Natural killer cell (primary cell): ENCODE measurements at regions of chr21 and their contacts with region 1.

Region 1: DNA sequence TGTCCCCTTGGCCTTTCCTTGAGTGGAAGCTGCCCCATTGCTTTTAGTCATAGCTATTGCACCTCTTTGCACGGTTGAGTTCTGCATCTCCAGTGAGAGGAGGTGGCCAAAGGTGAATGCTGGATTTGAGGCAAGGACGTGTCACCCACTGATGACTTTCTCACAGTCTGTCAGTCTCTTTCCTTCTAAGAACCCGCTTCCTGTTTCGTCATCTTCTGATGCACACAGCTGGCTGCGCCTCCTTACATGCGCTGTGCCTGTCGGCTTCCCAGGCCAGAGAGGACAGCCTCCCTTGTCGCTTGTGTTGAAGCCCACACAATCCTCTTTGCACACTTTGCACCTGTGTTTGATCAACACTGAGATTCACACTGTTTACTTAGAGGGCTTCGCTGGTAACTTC is 41.8 kb upstream of the PWP2 start:
- DNase-seq: peak; percentile 74 to 97
- ATAC-seq: peak; percentile 89 to 96 (median 90)
- H3K4me3 ChIP-seq: no peak overlapping the region
- H3K4me3 Mint-ChIP-seq: peak overlapping the region; percentile 85
- H3K27ac ChIP-seq: peak overlapping the region; percentile 94
- H3K27ac Mint-ChIP-seq: peak overlapping the region; percentile 94 to 100
- H3K4me1 ChIP-seq: peaks cover 27% of the 10 kb centered on the region
- H3K4me1 Mint-ChIP-seq: peaks cover 56 to 61% of the 10 kb centered on the region in 2 donors
- H3K27me3 ChIP-seq: no peaks in the 10 kb centered on the region
- H3K27me3 Mint-ChIP-seq: no peaks in the 10 kb centered on the region
- CTCF ChIP-seq: no peak

Region 2: GRCh38 chr21:44020551-44020950 is 44.9 kb before region 1 on chr21:
- intact Hi-C with region 1: loop called (anchors 2 kb)
- DNase-seq: no peak
- ATAC-seq: no peak
- H3K4me3 ChIP-seq: no peak overlapping the region
- H3K4me3 Mint-ChIP-seq: peak overlapping the region; percentile 17
- H3K27ac ChIP-seq: peak overlapping the region; percentile 63
- H3K27ac Mint-ChIP-seq: peak overlapping the region; percentile 83 to 95
- H3K4me1 ChIP-seq: peaks cover 74% of the 10 kb centered on the region
- H3K4me1 Mint-ChIP-seq: peaks cover 84 to 90% of the 10 kb centered on the region in 2 donors
- H3K27me3 ChIP-seq: no peaks in the 10 kb centered on the region
- H3K27me3 Mint-ChIP-seq: no peaks in the 10 kb centered on the region
- CTCF ChIP-seq: no peak

Region 3: DNA sequence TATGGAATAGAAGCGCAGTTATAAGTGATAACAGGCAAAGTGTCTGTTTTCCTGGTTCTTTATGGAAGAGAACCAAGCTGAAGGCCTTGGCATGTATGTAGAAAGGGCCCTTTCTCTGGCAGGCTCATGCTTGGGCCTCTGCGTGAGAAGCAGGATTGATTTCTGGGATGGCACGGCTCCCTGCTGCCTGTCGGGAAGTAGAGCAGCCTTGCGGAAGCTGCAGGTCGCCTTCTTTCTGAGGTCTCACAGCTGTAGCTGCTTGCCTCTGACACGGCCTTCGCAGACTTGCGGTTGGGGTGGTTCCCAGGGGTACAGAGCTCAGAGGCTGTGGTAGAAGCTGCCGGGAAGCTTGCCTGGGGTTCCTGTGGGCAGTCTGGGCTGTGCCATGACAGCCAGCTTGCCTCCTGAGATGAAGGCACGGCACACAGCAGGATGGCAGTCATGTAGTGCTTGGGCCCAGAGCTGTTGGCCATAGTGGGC is 13.9 kb before region 1 on chr21:
- intact Hi-C with region 1: no loop called
- DNase-seq: peak in 1 of 2 donors; percentile 32
- ATAC-seq: peak in 2 of 3 donors; percentile 45 to 64
- H3K4me3 ChIP-seq: no peak overlapping the region
- H3K4me3 Mint-ChIP-seq: no peak overlapping the region
- H3K27ac ChIP-seq: no peak overlapping the region
- H3K27ac Mint-ChIP-seq: peak overlapping the region; percentile 30 to 86
- H3K4me1 ChIP-seq: peaks cover 20% of the 10 kb centered on the region
- H3K4me1 Mint-ChIP-seq: peaks cover 68 to 70% of the 10 kb centered on the region in 2 donors
- H3K27me3 ChIP-seq: no peaks in the 10 kb centered on the region
- H3K27me3 Mint-ChIP-seq: no peaks in the 10 kb centered on the region
- CTCF ChIP-seq: no peak

Region 4: GRCh38 chr21:44083631-44084291 is 18.3 kb after region 1 on chr21:
- intact Hi-C with region 1: loop called (anchors 1 kb)
- DNase-seq: peak; percentile 71 to 91
- ATAC-seq: peak; percentile 62 to 82 (median 73)
- H3K4me3 ChIP-seq: peak overlapping the region; percentile 51
- H3K4me3 Mint-ChIP-seq: peak overlapping the region; percentile 94
- H3K27ac ChIP-seq: peak overlapping the region; percentile 95
- H3K27ac Mint-ChIP-seq: peak overlapping the region; percentile 98 to 99
- H3K4me1 ChIP-seq: peaks cover 95% of the 10 kb centered on the region
- H3K4me1 Mint-ChIP-seq: peaks cover 91 to 98% of the 10 kb centered on the region in 2 donors
- H3K27me3 ChIP-seq: no peaks in the 10 kb centered on the region
- H3K27me3 Mint-ChIP-seq: no peaks in the 10 kb centered on the region
- CTCF ChIP-seq: no peak